CD14-positive monocyte (primary cell): ENCODE measurements at regions of chr12 and their contacts with region 1.

Region 1: GRCh38 chr12:111451649-111452129 is 46.0 kb downstream of the SH2B3 start:
- DNase-seq: peak; percentile 58 to 73 (median 69)
- H3K4me3 ChIP-seq: no peak overlapping the region
- H3K4me3 Mint-ChIP-seq: no peak overlapping the region
- H3K27ac ChIP-seq: peak overlapping the region in 1 of 2 donors; percentile 58
- H3K27ac Mint-ChIP-seq: peak overlapping the region in 6 of 7 donors; percentile 1 to 86 (median 70)
- H3K4me1 ChIP-seq: peaks cover 8 to 21% of the 10 kb centered on the region in 2 donors
- H3K4me1 Mint-ChIP-seq: peaks cover 31% of the 10 kb centered on the region
- H3K27me3 ChIP-seq: no peaks in the 10 kb centered on the region
- H3K27me3 Mint-ChIP-seq: peaks cover 0 to 3% (median 0%) of the 10 kb centered on the region in 3 donors
- CTCF ChIP-seq: peak; percentile 83

Region 2: GRCh38 chr12:111330800-111331752 is 120.6 kb before region 1 on chr12:
- intact Hi-C with region 1: loop called (anchors 5 kb)
- DNase-seq: peak; percentile 33 to 63 (median 52)
- H3K4me3 ChIP-seq: no peak overlapping the region
- H3K4me3 Mint-ChIP-seq: no peak overlapping the region
- H3K27ac ChIP-seq: no peak overlapping the region
- H3K27ac Mint-ChIP-seq: peak overlapping the region in 1 of 7 donors; percentile 46
- H3K4me1 ChIP-seq: no peaks in the 10 kb centered on the region
- H3K4me1 Mint-ChIP-seq: peaks cover 3% of the 10 kb centered on the region
- H3K27me3 ChIP-seq: no peaks in the 10 kb centered on the region
- H3K27me3 Mint-ChIP-seq: peaks cover 2 to 7% (median 4%) of the 10 kb centered on the region in 3 donors
- CTCF ChIP-seq: peak; percentile 69

Region 3: GRCh38 chr12:111396726-111397445 is 54.8 kb before region 1 on chr12:
- intact Hi-C with region 1: loop called in 1 of 2 experiments (anchors 2 kb)
- DNase-seq: peak; percentile 88 to 97 (median 89)
- H3K4me3 ChIP-seq: peak overlapping the region; percentile 15 to 51 (median 16)
- H3K4me3 Mint-ChIP-seq: peak overlapping the region; percentile 67 to 82
- H3K27ac ChIP-seq: peak overlapping the region; percentile 79 to 82
- H3K27ac Mint-ChIP-seq: peak overlapping the region; percentile 92 to 99 (median 98)
- H3K4me1 ChIP-seq: peaks cover 80 to 86% of the 10 kb centered on the region in 2 donors
- H3K4me1 Mint-ChIP-seq: peaks cover 72% of the 10 kb centered on the region
- H3K27me3 ChIP-seq: no peaks in the 10 kb centered on the region
- H3K27me3 Mint-ChIP-seq: peaks cover 0 to 6% (median 0%) of the 10 kb centered on the region in 3 donors
- CTCF ChIP-seq: peak; percentile 100